ENCODE measurements at regions of chr15 and their contacts with region 1.

Region 1: DNA sequence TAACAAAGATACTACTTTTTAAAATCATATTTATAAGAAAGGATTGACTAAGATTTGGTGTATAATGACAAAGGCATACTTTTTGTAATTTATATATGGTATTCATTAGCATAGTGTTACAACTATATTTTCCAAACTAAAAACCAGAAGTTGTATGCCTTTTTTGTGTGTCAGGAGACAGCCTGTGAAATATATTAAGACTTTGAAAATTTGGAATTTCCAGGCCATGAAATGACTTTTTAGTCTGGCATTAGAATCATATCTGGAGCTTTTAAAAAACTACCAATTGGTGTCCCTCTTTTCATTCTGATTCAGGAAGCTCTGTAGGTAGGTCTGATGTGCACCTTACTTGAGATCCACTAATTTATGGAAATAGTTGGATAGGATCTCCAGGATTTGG is 41.9 kb downstream of the CALML4 start:
- DNase-seq: no peak

Region 2: GRCh38 chr15:67456677-67457529 is 706.3 kb before region 1 on chr15:
- intact Hi-C with region 1: loop called (anchors 10 kb)
- DNase-seq: peak; percentile 89

Region 3: GRCh38 chr15:68204776-68205557 is 41.8 kb after region 1 on chr15 and contains the start of gene CALML4:
- intact Hi-C with region 1: loop called (anchors 5 kb)
- DNase-seq: no peak
- total RNA-seq, gene CALML4: 1.6 TPM